ENCODE measurements at regions of chr11 and their contacts with region 1.

Region 1: DNA sequence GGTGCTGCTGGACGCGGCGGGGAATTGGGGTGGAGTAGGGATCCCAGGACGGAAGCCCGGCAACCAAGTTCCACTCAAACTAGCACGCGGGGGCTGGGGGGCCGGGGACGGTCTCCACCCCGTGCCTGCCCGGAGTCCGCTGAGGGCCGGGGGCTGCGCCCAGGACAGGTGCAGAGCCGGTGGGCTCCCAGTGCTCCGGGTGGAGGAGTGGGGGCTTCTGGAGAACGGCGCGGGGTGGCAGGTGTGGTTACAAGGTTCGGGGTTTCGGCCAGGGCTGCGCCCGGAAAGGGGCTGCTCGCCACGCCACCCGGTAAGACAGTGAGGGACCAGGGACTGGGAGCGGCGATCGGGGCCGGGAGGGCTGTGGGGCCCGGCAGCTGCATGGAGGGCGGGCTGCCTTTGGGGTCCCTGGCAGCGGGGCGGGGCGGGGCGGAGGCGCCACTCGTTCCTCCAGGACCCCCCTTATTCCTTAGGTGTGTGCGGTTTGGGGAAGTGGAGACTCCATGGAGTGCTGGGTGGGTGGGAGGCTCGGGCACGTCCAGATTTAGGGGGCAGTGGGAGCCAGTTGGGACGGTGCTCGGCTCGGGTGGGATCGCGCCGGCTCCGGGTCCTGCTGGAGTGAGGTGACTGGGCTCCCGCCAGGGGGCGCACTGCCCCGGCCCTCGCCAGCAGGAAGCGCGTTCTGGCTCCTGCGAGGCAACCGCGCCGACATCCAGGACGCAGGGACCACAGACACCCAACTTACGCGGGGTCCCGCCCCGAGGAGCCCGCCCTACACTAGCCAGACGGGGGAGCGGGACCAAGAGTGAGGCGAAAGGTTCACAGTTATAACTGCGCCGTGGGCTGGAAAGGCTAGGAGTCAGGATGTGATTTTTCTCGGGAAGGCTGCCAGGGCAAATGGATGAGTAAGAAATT is 868 bp downstream of the TSPAN18 start:
- DNase-seq: peak; percentile 55 to 87 (median 74)
- ATAC-seq: peak; percentile 71
- H3K4me3 ChIP-seq: peak overlapping the region; percentile 63 to 70
- H3K4me3 Mint-ChIP-seq: peak overlapping the region; percentile 84
- H3K27ac ChIP-seq: no peak overlapping the region
- H3K27ac Mint-ChIP-seq: peak overlapping the region; percentile 27
- H3K4me1 ChIP-seq: peaks cover 18% of the 10 kb centered on the region
- H3K4me1 Mint-ChIP-seq: peaks cover 30% of the 10 kb centered on the region
- H3K27me3 ChIP-seq: peaks cover 3 to 6% of the 10 kb centered on the region in 2 experiments
- H3K27me3 Mint-ChIP-seq: peaks cover 7% of the 10 kb centered on the region
- CTCF ChIP-seq: peak; percentile 90

Region 2: DNA sequence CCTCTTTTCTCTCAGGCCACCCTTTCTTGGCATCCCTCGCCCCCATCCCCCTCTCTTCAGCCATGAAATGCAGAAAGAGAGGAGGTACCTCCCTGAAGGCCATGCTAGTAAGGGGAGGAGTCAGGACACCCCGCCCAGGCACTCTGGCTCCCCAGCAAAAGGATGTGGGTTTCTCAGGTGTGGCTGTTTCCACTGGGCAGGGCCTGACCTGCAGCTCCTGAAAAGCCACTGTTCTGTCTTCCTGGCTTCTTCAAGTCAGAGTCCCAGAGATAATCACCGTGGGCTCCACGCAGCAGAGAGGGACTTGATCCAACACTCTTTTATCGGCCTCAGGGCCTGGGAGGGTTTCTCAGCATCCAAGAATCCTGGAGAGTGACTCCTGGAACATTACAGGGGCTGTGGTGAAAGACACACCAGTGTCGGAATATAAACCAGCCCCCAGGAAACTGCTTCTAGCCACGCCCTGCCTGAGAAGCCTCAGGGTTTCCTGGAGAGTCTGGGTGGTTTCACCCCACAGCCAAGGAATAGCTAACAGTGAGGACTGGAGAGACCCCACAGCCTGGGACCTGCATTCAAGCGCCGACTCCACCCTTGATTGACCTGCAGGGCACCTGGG is 46.5 kb before region 1 on chr11:
- CTCF ChIA-PET with region 1: no interaction called
- POLR2A ChIA-PET with region 1: no interaction called
- intact Hi-C with region 1: loop called in 1 of 2 experiments (anchors 5 kb)
- DNase-seq: peak in 8 of 9 experiments; percentile 11 to 75 (median 46)
- ATAC-seq: peak; percentile 75
- H3K4me3 ChIP-seq: peak overlapping the region; percentile 25 to 38
- H3K4me3 Mint-ChIP-seq: peak overlapping the region; percentile 76
- H3K27ac ChIP-seq: peak overlapping the region in 1 of 2 experiments; percentile 31
- H3K27ac Mint-ChIP-seq: peak overlapping the region; percentile 85
- H3K4me1 ChIP-seq: peaks cover 35% of the 10 kb centered on the region
- H3K4me1 Mint-ChIP-seq: peaks cover 39% of the 10 kb centered on the region
- H3K27me3 ChIP-seq: no peaks in the 10 kb centered on the region
- H3K27me3 Mint-ChIP-seq: no peaks in the 10 kb centered on the region
- CTCF ChIP-seq: no peak

Region 3: DNA sequence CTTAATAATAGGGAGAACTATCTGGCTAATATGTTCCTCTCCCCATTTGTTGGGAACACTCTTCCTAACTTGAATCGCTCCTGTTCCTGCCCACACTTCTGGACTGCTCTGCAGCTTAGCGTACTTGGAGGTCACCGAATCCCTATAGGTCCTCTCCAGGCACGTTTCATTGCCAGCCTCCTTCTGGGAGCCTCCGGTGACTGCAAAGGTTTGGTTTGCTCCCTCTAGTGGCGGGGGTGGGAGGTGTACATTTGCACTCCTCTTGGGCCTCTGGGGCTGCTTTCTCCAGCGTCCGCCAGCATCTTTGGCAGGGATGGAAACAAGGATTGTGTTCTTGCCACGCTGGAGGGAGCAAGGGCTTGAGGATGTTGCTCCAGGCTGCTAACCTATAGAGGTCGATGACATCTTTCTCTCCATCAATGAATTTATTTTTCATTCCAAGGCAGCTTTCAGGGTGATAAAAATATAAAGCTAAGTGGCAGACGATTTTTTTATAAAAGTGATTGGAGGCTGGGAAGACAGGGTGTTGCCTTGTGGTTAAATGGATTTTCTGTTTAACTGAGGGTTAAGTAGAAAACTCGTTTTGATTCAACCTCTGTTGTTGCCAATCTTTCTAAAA is 47.8 kb after region 1 on chr11:
- CTCF ChIA-PET with region 1: interaction called, 12 read pairs
- POLR2A ChIA-PET with region 1: no interaction called
- intact Hi-C with region 1: loop called (anchors 1 to 5 kb)
- DNase-seq: peak; percentile 10 to 73 (median 52)
- ATAC-seq: peak; percentile 49
- H3K4me3 ChIP-seq: no peak overlapping the region
- H3K4me3 Mint-ChIP-seq: no peak overlapping the region
- H3K27ac ChIP-seq: no peak overlapping the region
- H3K27ac Mint-ChIP-seq: no peak overlapping the region
- H3K4me1 ChIP-seq: no peaks in the 10 kb centered on the region
- H3K4me1 Mint-ChIP-seq: peaks cover 5% of the 10 kb centered on the region
- H3K27me3 ChIP-seq: no peaks in the 10 kb centered on the region
- H3K27me3 Mint-ChIP-seq: no peaks in the 10 kb centered on the region
- CTCF ChIP-seq: peak; percentile 76

Region 4: DNA sequence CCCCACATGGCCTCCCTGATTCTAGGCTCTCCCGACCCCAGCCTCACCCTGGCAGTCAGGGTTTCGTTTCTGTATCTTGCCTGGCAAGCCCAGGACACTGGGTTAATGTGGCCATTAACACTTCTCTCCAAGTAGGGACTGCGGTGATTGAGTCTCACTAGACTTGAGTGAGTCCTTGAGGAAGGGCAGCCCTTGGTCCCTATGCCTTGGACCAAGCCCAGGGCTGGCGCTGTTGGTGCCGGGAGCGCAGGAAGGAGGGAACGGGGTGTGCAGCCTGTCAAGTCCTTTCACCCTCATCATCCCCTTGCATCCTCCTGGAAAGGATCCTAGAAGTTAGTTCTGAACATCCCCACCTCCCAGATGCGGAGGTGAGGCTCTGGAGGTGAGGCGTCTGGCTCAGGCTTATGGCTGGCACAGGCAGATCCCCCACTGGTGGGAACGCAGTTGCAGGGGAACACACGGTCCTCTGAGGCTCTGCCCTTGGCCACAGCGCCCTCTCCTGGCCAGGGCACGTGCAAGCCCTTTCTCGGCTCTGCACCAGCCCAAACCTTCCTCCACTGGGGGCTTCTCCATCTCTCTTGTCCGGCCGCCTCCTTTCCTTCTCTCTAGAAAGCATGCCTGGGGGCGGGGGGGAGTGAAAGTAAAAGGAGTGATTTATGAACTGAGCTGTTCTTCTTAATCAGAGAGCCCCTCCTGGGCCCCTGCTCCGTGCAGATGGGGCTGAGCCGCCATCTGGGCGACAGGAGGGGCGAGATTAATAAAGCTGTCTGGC is 166.4 kb after region 1 on chr11:
- CTCF ChIA-PET with region 1: no interaction called
- POLR2A ChIA-PET with region 1: no interaction called
- intact Hi-C with region 1: loop called in 1 of 2 experiments (anchors 5 kb)
- DNase-seq: peak in 8 of 9 experiments; percentile 48 to 72 (median 60)
- ATAC-seq: peak; percentile 55
- H3K4me3 ChIP-seq: no peak overlapping the region
- H3K4me3 Mint-ChIP-seq: no peak overlapping the region
- H3K27ac ChIP-seq: no peak overlapping the region
- H3K27ac Mint-ChIP-seq: no peak overlapping the region
- H3K4me1 ChIP-seq: no peaks in the 10 kb centered on the region
- H3K4me1 Mint-ChIP-seq: no peaks in the 10 kb centered on the region
- H3K27me3 ChIP-seq: no peaks in the 10 kb centered on the region
- H3K27me3 Mint-ChIP-seq: no peaks in the 10 kb centered on the region
- CTCF ChIP-seq: peak; percentile 54

Measured in CD8-positive, alpha-beta T cell (primary cell).